A549 (cell line): ENCODE measurements at regions of chr11 and their contacts with region 1.

Region 1: GRCh38 chr11:43825217-43825816 is 55.3 kb upstream of the ALKBH3 start:
- DNase-seq: peak; percentile 10 to 31
- ATAC-seq: peak; percentile 30 to 70; a peak in 5 of 6 replicates
- H3K4me3 ChIP-seq: no peak overlapping the region
- H3K27ac ChIP-seq: no peak overlapping the region
- H3K4me1 ChIP-seq: peaks cover 7% of the 10 kb centered on the region; the same call in 2 of the 3 replicates
- CTCF ChIP-seq: peak; percentile 84
- EP300 ChIP-seq: no peak
- POLR2A ChIP-seq: no peak
- RAD21 ChIP-seq: peak; percentile 61 to 68

Region 2: GRCh38 chr11:43837879-43838278 is 12.6 kb after region 1 on chr11:
- CTCF ChIA-PET with region 1: interaction called, 15 read pairs
- POLR2A ChIA-PET with region 1: no interaction called
- DNase-seq: no peak
- ATAC-seq: no peak
- H3K4me3 ChIP-seq: no peak overlapping the region
- H3K27ac ChIP-seq: no peak overlapping the region
- H3K4me1 ChIP-seq: no peaks in the 10 kb centered on the region
- CTCF ChIP-seq: no peak
- EP300 ChIP-seq: no peak
- POLR2A ChIP-seq: no peak
- RAD21 ChIP-seq: no peak